Upper lobe of right lung (tissue), 1 donor: ENCODE measurements at regions of chr5 and their contacts with region 1.

Region 1: GRCh38 chr5:62783374-62784057 is 204.9 kb downstream of the LRRC70 start:
- DNase-seq: no peak
- ATAC-seq: no peak
- H3K4me3 ChIP-seq: no peak overlapping the region
- H3K27ac ChIP-seq: no peak overlapping the region
- H3K4me1 ChIP-seq: peaks cover 5% of the 10 kb centered on the region
- H3K27me3 ChIP-seq: no peaks in the 10 kb centered on the region
- CTCF ChIP-seq: no peak

Region 2: GRCh38 chr5:62460578-62460983 is 322.9 kb before region 1 on chr5:
- intact Hi-C with region 1: loop called (anchors 10 kb)
- DNase-seq: no peak
- ATAC-seq: peak; percentile 82
- H3K4me3 ChIP-seq: no peak overlapping the region
- H3K27ac ChIP-seq: no peak overlapping the region
- H3K4me1 ChIP-seq: no peaks in the 10 kb centered on the region
- H3K27me3 ChIP-seq: no peaks in the 10 kb centered on the region
- CTCF ChIP-seq: peak; percentile 82